GM18951 (cell line): ENCODE measurements at regions of chr3 and their contacts with region 1.

Region 1: DNA sequence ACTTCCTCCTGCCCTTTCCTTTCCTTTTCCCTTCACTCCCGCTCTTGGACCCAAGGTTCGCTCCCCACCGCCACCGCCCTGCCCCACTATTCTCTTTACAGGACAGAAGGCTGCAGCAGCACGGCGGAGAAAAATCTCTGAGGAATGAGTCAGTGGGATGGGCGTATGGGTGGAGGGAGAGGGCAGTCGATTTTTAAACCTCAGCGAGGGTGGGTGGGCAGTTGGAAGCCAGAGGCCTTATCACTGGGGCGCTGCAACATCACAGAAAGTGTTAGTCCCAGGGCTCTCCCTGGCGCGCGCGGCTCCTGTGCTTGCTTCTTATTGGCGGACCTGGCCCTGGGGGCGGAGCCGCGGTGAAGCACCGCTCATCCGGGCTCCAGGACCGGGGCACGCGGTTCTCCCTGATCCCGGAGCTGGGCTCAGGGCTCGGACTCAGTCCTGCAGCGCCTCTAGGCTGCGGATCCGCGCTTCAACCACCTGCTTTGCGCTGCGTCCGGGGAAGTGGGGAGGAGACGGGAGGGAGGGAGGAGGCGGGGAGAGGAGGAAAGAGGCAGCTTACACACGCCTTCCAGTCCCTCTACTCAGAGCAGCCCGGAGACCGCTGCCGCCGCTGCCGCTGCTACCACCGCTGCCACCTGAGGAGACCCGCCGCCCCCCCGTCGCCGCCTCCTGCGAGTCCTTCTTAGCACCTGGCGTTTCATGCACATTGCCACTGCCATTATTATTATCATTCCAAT is at the start of gene ALCAM:
- POLR2A ChIP-seq: peak; percentile 72

Region 2: DNA sequence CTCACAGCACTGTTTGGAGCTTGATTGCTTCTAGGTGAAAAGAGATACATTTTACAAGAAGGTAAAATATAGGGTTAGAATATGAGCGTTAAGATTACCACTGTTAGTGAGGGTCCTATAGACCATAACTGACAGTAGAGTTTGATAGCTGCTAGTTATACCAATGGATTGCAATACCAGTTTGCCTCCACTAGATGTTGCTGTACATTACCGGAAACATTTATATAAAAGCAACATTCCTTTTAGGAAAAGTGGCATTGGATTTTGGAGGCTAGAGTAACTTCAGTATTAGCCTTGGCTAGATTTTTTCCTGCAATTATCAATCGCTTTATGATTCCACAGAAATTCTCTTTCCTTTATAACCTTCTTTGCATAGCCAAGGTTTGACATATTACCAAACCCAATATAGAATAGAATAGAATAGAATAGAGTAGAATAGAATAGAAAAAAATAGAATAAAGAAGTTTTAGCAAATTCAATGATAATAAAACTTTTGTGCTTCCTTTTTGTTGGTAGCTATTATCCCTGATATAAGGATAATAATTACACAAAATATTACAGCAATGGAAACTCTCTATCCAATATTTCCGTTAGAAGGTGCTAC is 1093.3 kb before region 1 on chr3:
- in situ Hi-C with region 1: loop called (anchors 25 kb)
- POLR2A ChIP-seq: no peak

Region 3: GRCh38 chr3:105199217-105199616 is 167.3 kb before region 1 on chr3:
- in situ Hi-C with region 1: no loop called
- POLR2A ChIP-seq: no peak

Region 4: DNA sequence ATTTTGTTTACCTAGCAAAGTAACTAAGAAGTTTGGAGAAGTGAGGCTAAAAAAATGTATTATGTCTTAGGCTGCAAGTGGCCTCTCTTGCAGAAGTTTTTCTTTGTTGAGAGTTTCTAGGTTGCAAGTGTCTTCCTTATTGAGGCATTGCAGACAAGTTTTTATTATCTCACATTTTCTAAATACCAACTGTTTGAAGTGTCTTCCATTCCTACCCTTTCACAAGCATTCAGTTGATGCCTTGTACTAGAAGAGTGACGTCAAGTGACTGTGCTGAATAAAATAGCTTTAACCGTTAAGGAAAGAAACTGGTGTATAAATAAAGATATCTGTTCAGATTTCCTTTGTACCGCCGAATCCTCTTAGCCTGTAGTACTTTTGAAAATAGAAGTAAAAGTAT is 123.6 kb after region 1 on chr3:
- in situ Hi-C with region 1: no loop called
- POLR2A ChIP-seq: no peak

Region 5: DNA sequence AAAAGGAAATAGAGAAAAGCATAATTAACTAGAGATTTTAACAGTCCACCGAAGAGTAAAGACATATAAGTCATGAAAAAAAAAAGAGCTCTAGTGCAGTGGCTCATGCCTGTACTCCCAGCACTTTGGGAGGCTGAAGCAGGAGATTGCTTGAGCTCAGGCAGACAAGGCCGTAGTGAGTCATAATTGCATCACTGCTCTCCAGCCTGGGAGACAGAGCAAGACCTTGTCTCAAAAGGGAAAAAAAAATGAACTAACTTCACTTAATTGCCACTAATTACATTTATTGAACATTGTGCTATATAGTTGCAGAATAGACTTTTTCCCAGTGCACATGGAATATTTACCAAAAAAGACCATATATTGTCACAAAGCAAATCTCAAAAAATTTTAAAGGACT is 280.6 kb after region 1 on chr3:
- in situ Hi-C with region 1: no loop called
- POLR2A ChIP-seq: no peak